ENCODE measurements at regions of chr3 and their contacts with region 1.

Region 1: GRCh38 chr3:86221601-86222000 is 769.3 kb downstream of the VGLL3 start:
- DNase-seq: no peak
- H3K4me3 ChIP-seq: no peak overlapping the region
- H3K27ac ChIP-seq: no peak overlapping the region
- H3K4me1 ChIP-seq: no peaks in the 10 kb centered on the region
- H3K27me3 ChIP-seq: no peaks in the 10 kb centered on the region
- CTCF ChIP-seq: no peak
- EP300 ChIP-seq: no peak
- POLR2A ChIP-seq: no peak

Region 2: GRCh38 chr3:87033205-87033604 is 811.6 kb after region 1 on chr3:
- in situ Hi-C with region 1: no loop called
- intact Hi-C with region 1: loop called (anchors 5 kb)
- DNase-seq: no peak
- H3K4me3 ChIP-seq: no peak overlapping the region
- H3K27ac ChIP-seq: no peak overlapping the region
- H3K4me1 ChIP-seq: no peaks in the 10 kb centered on the region
- H3K27me3 ChIP-seq: no peaks in the 10 kb centered on the region
- CTCF ChIP-seq: no peak
- EP300 ChIP-seq: no peak
- POLR2A ChIP-seq: no peak

Region 3: DNA sequence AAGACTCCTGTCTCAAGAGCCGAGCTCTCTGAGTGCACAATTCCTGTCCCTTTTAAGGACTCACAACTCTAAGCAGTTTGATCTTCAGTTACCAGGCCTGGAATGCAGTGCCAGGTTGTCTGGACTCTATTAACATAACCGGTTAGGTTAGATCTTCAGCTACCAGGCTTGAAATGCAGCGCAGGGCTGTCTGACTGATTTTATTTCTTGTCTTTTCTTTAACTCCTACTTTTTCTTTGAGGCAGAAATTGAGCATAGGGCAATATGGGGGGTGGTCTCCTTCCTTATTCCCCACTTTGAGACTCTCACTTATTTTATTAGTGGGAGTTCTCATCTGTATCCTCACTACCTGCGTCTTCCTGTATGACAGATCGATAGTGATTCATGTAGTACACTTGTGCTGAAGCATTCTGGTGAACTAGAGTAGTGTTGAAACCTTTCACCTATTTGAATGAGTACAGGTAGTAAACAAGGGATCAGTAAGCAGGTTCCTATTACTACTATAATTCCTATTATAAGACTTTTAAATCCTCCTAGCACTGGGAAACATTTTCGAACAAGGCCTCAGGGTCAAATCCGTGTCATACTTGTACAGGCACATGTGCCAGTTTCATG is 1512.3 kb after region 1 on chr3:
- in situ Hi-C with region 1: no loop called
- intact Hi-C with region 1: no loop called
- DNase-seq: peak; percentile 10
- H3K4me3 ChIP-seq: no peak overlapping the region
- H3K27ac ChIP-seq: no peak overlapping the region
- H3K4me1 ChIP-seq: no peaks in the 10 kb centered on the region
- H3K27me3 ChIP-seq: no peaks in the 10 kb centered on the region
- CTCF ChIP-seq: no peak
- EP300 ChIP-seq: no peak
- POLR2A ChIP-seq: no peak